Sigmoid colon (tissue), 7 donors: ENCODE measurements at regions of chr15 and their contacts with region 1.

Region 1: GRCh38 chr15:83248151-83249029 is 36.1 kb downstream of the BNC1 start:
- DNase-seq: no peak
- H3K4me3 ChIP-seq: no peak overlapping the region
- H3K27ac ChIP-seq: no peak overlapping the region
- H3K4me1 ChIP-seq: peaks cover 0 to 3% (median under 1%) of the 10 kb centered on the region in 4 donors
- H3K27me3 ChIP-seq: peaks cover 0 to 22% (median 7%) of the 10 kb centered on the region in 3 donors
- CTCF ChIP-seq: peak; percentile 57 to 93 (median 80)
- EP300 ChIP-seq: no peak
- POLR2A ChIP-seq: no peak

Region 2: DNA sequence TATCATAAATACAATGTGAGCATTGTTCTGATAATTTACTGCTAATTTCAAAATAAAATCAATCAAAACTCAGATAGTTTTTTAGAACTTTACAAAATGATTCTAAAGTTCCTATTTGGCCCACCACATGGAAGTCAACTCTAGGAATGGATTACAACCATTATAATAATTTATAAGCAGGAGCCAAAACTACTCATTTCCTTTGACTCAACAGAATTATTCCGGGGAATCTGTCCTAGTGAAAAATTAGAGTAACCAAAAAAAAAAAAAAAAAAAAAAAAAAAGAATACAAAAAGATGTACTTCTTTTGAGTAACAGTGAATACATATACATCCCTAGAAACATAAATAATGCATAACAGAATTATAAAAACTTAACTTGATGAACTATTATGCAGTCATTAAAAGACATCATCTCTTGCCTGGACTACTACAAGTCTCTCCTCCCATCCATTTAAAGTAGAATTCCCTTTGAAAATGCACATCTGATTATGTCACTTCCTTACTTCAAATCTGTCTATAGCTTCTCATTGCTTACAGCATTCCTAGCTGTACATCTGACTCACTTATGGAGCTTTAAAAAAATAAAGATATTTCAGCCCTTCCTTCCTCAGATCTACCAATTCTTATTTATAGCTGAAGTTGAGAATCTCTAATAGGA is 84.1 kb before region 1 on chr15:
- intact Hi-C with region 1: no loop called
- DNase-seq: no peak
- H3K4me3 ChIP-seq: no peak overlapping the region
- H3K27ac ChIP-seq: no peak overlapping the region
- H3K4me1 ChIP-seq: no peaks in the 10 kb centered on the region
- H3K27me3 ChIP-seq: no peaks in the 10 kb centered on the region
- CTCF ChIP-seq: no peak
- EP300 ChIP-seq: no peak
- POLR2A ChIP-seq: no peak

Region 3: DNA sequence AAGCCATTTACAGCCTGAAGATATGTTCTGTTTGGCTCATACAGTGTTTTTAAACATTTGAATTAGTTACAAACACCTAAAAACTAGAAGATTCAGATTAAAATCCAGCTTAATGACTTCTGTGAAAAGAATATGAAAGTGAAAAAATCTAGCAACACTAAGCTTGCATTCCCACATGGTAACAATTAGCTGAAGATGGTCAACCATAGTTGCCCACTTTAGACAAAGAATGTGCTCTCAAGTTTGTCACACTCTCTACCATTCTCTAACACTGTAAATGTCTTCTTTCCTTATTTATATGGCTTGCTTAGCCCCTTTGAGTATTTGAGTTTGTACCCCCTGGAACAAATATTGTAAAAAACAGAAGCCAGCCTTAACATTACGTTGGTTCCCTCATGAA is 73.5 kb before region 1 on chr15:
- intact Hi-C with region 1: no loop called
- DNase-seq: no peak
- H3K4me3 ChIP-seq: no peak overlapping the region
- H3K27ac ChIP-seq: no peak overlapping the region
- H3K4me1 ChIP-seq: no peaks in the 10 kb centered on the region
- H3K27me3 ChIP-seq: no peaks in the 10 kb centered on the region
- CTCF ChIP-seq: no peak
- EP300 ChIP-seq: no peak
- POLR2A ChIP-seq: no peak

Region 4: DNA sequence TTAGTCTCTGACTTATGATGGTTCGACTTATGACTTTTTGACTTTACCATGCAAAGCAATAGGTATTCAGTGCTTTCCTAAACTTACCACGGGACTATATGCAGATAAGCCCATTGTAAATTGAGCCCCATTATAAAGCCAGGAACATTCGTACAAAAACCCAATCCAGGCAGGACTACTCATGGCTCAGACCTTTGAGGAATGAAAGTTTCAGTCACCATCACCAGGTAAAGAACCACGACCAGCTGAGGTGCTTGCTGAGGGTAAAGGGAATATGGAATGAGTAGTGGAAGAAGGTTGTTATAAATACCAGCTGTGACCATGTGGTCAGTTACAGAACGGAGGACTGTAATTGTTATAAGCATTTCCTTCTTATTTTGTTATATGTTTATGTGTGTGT is 91.0 kb after region 1 on chr15:
- intact Hi-C with region 1: no loop called
- DNase-seq: no peak
- H3K4me3 ChIP-seq: no peak overlapping the region
- H3K27ac ChIP-seq: no peak overlapping the region
- H3K4me1 ChIP-seq: no peaks in the 10 kb centered on the region
- H3K27me3 ChIP-seq: no peaks in the 10 kb centered on the region
- CTCF ChIP-seq: no peak
- EP300 ChIP-seq: no peak
- POLR2A ChIP-seq: no peak

Region 5: DNA sequence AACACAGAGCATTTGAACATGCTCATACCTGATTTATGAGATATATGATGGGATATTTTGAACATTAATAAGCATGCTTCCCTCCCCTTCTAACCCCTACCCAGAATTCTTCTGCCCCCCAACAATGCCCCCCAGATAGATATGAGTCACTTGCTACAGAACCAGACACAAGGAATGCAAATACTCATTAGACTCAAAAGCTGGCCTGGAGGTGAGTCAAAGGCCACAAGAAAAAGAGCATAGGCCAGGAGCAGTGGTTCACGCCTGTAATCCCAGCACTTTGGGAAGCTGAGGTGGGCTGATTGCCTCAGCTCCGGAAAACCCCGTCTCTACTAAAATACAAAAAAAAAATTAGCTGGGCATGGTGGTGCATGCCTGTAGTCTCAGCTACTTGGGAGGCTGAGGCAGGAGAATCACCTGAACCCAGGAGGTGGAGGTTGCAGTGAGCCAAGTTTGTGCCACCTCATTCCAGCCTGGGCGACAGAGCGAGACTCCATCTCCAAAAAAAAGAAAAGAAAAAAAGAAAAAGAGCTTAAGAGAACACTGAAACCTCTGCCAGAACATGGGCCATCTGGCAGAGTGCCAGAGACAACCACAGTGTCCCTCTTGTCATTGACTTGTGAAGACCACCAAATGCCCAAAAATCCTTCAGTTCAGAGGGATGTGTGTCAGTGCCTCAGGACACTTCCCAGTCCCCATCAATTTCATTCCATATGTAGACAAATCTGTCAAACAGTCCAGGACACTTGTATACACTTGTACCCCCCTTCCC is 194.9 kb after region 1 on chr15:
- intact Hi-C with region 1: no loop called
- DNase-seq: no peak
- H3K4me3 ChIP-seq: no peak overlapping the region
- H3K27ac ChIP-seq: no peak overlapping the region
- H3K4me1 ChIP-seq: peaks cover 0 to 27% (median 13%) of the 10 kb centered on the region in 4 donors
- H3K27me3 ChIP-seq: peaks cover 0 to 6% (median 0%) of the 10 kb centered on the region in 3 donors
- CTCF ChIP-seq: no peak
- EP300 ChIP-seq: no peak
- POLR2A ChIP-seq: no peak

Region 6: DNA sequence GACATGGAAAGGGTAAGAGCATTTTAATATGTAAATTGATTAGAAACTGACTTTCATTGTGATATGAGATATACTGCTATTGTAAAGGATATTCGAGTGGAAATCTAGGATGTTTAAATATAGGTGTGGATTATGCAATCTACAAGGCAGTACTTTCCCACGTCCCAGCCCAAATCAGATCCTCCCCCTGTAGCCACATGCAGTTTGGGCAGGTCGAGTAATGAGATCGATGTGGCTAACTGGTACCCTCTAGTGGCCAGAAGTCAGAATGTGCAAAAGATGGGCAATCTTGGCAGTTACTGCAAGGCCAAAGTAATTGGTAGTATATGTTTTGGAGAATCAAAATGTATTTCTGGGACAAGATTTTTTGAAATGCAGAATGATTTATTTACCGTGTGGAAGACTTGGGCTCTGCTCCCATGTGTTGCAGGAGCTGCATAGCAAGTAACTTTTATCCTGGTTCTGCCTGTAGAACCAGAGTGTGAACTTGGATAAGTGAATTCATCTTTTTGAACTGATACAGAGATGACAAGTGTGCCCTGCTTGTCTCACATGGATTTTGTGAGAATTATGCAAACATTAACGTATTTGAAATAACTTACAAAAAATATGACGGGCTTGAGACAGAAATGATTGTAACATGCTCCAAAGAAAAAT is 311.0 kb after region 1 on chr15:
- intact Hi-C with region 1: loop called (anchors 1 kb)
- DNase-seq: peak; percentile 78
- H3K4me3 ChIP-seq: no peak overlapping the region
- H3K27ac ChIP-seq: no peak overlapping the region
- H3K4me1 ChIP-seq: no peaks in the 10 kb centered on the region
- H3K27me3 ChIP-seq: no peaks in the 10 kb centered on the region
- CTCF ChIP-seq: peak; percentile 54 to 83 (median 74)
- EP300 ChIP-seq: no peak
- POLR2A ChIP-seq: no peak